ENCODE measurements at regions of chr1 and their contacts with region 1.

Region 1: GRCh38 chr1:108057541-108057940 is 92.6 kb upstream of the VAV3 start:
- DNase-seq: peak in 1 of 14 experiments; percentile 26
- ATAC-seq: no peak
- H3K4me3 ChIP-seq: no peak overlapping the region
- H3K4me3 Mint-ChIP-seq: no peak overlapping the region
- H3K27ac ChIP-seq: no peak overlapping the region
- H3K27ac Mint-ChIP-seq: no peak overlapping the region
- H3K4me1 ChIP-seq: no peaks in the 10 kb centered on the region
- H3K4me1 Mint-ChIP-seq: no peaks in the 10 kb centered on the region
- H3K27me3 ChIP-seq: no peaks in the 10 kb centered on the region
- H3K27me3 Mint-ChIP-seq: no peaks in the 10 kb centered on the region
- CTCF ChIP-seq: no peak

Region 2: DNA sequence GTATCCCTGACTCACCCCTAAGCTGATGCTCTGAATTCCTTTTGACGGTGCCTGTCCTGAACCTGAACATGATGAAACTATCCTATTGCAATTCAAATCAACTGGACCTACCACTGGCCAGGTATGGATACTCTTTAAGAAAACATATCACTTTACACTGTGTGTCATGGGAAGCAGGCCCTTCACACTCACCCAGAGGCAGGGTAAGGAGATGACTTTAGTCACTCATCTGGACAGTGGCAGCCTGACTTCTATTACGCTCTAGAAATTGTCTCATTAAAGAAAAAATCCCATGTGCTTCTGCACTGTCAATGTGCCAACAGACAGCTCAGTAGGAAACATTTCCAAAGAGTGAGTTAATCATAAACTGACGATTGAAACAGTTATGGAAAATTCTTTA is 186.8 kb before region 1 on chr1:
- CTCF ChIA-PET with region 1: no interaction called
- POLR2A ChIA-PET with region 1: no interaction called
- intact Hi-C with region 1: no loop called
- DNase-seq: no peak
- ATAC-seq: no peak
- H3K4me3 ChIP-seq: no peak overlapping the region
- H3K4me3 Mint-ChIP-seq: no peak overlapping the region
- H3K27ac ChIP-seq: no peak overlapping the region
- H3K27ac Mint-ChIP-seq: no peak overlapping the region
- H3K4me1 ChIP-seq: peaks cover under 1% of the 10 kb centered on the region
- H3K4me1 Mint-ChIP-seq: peaks cover 7% of the 10 kb centered on the region
- H3K27me3 ChIP-seq: no peaks in the 10 kb centered on the region
- H3K27me3 Mint-ChIP-seq: no peaks in the 10 kb centered on the region
- CTCF ChIP-seq: no peak

Region 3: GRCh38 chr1:108082738-108083481 is 25.4 kb after region 1 on chr1:
- CTCF ChIA-PET with region 1: no interaction called
- POLR2A ChIA-PET with region 1: no interaction called
- intact Hi-C with region 1: no loop called
- DNase-seq: peak in 3 of 14 experiments; percentile 42 to 50 (median 44)
- ATAC-seq: peak; percentile 45
- H3K4me3 ChIP-seq: no peak overlapping the region
- H3K4me3 Mint-ChIP-seq: peak overlapping the region; percentile 3
- H3K27ac ChIP-seq: peak overlapping the region; percentile 8 to 28
- H3K27ac Mint-ChIP-seq: peak overlapping the region; percentile 80
- H3K4me1 ChIP-seq: peaks cover 42% of the 10 kb centered on the region
- H3K4me1 Mint-ChIP-seq: peaks cover 59% of the 10 kb centered on the region
- H3K27me3 ChIP-seq: no peaks in the 10 kb centered on the region
- H3K27me3 Mint-ChIP-seq: no peaks in the 10 kb centered on the region
- CTCF ChIP-seq: no peak

Region 4: DNA sequence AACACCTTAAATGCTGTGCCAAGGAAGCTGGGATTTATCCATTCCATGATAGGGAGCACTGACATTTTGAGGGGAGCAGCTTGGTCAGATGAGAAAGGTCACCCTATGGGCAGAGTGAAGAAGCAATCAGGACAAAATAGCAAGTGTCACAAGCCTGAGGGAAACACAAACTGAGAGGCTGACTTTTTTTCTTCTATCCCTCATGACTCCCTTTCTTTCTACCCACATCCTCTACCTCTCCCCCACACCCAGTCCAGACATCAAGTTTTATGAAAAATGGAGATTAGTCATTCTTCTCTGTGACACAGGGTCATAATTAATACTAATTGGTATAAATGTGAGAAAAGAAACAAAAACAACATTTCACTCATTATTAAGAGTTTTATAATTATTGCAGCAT is 39.5 kb after region 1 on chr1:
- CTCF ChIA-PET with region 1: no interaction called
- POLR2A ChIA-PET with region 1: no interaction called
- intact Hi-C with region 1: loop called (anchors 5 to 10 kb)
- DNase-seq: no peak
- ATAC-seq: no peak
- H3K4me3 ChIP-seq: no peak overlapping the region
- H3K4me3 Mint-ChIP-seq: no peak overlapping the region
- H3K27ac ChIP-seq: no peak overlapping the region
- H3K27ac Mint-ChIP-seq: no peak overlapping the region
- H3K4me1 ChIP-seq: no peaks in the 10 kb centered on the region
- H3K4me1 Mint-ChIP-seq: peaks cover 14% of the 10 kb centered on the region
- H3K27me3 ChIP-seq: no peaks in the 10 kb centered on the region
- H3K27me3 Mint-ChIP-seq: no peaks in the 10 kb centered on the region
- CTCF ChIP-seq: no peak

Region 5: GRCh38 chr1:108107658-108108518 is 50.3 kb after region 1 on chr1:
- CTCF ChIA-PET with region 1: no interaction called
- POLR2A ChIA-PET with region 1: no interaction called
- intact Hi-C with region 1: loop called in 1 of 2 experiments (anchors 10 kb)
- DNase-seq: peak in 5 of 14 experiments; percentile 12 to 70 (median 30)
- ATAC-seq: peak; percentile 97
- H3K4me3 ChIP-seq: no peak overlapping the region
- H3K4me3 Mint-ChIP-seq: no peak overlapping the region
- H3K27ac ChIP-seq: no peak overlapping the region
- H3K27ac Mint-ChIP-seq: no peak overlapping the region
- H3K4me1 ChIP-seq: no peaks in the 10 kb centered on the region
- H3K4me1 Mint-ChIP-seq: peaks cover 6% of the 10 kb centered on the region
- H3K27me3 ChIP-seq: no peaks in the 10 kb centered on the region
- H3K27me3 Mint-ChIP-seq: no peaks in the 10 kb centered on the region
- CTCF ChIP-seq: no peak

Measured in CD4-positive, alpha-beta T cell (primary cell).